ENCODE measurements at regions of chr11 and their contacts with region 1.

Region 1: GRCh38 chr11:107858217-107859070 is at the start of gene SLC35F2:
- DNase-seq: peak; percentile 89
- H3K4me3 ChIP-seq: peak within 1 kb of the TSS; percentile 81 to 94 (median 91)
- H3K27ac ChIP-seq: peak within 1 kb of the TSS; percentile 35
- H3K4me1 ChIP-seq: peaks cover 12% of the 10 kb centered on the region
- H3K27me3 ChIP-seq: no peaks in the 10 kb centered on the region
- CTCF ChIP-seq: peak in 1 of 2 donors; percentile 22
- total RNA-seq, gene SLC35F2: 23.5 to 35.3 TPM

Region 2: GRCh38 chr11:107676336-107677057 is 181.9 kb before region 1 on chr11:
- CTCF ChIA-PET with region 1: no interaction called
- dilution Hi-C with region 1: no loop called
- in situ Hi-C with region 1: no loop called
- intact Hi-C with region 1: no loop called
- DNase-seq: no peak
- H3K4me3 ChIP-seq: no peak overlapping the region
- H3K27ac ChIP-seq: no peak overlapping the region
- H3K4me1 ChIP-seq: no peaks in the 10 kb centered on the region
- H3K27me3 ChIP-seq: no peaks in the 10 kb centered on the region
- CTCF ChIP-seq: no peak

Region 3: DNA sequence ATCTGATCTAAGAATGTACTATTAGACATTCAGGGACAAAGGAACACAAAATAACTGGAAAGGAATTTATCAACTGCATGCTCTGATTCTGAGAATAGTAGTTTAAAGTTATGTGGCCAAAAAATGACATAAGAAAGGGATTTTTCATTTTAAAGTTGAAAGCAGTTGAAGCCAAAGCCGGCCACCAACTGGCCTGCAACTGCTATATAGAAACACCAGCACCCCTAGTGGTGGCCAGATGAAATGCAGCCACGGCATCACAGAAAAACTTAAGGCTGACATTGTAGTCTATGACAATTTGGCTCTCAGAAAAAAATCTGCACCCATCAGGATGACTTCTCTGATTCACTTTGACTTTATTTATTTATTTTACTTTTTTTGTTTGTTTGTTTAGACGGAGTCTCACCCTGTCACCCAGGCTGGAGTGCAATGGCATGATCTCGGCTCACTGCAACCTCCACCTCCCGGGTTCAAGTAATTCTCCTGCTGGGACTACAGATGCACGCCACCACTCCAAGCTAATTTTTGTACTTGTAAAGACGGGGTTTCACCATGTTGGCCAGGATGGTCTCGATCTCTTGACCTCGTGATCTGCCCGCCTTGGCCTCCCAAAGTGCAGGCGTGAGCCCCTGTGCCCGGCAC is 59.1 kb before region 1 on chr11:
- CTCF ChIA-PET with region 1: no interaction called
- dilution Hi-C with region 1: no loop called
- in situ Hi-C with region 1: no loop called
- intact Hi-C with region 1: loop called (anchors 1 kb)
- DNase-seq: peak; percentile 38
- H3K4me3 ChIP-seq: no peak overlapping the region
- H3K27ac ChIP-seq: no peak overlapping the region
- H3K4me1 ChIP-seq: no peaks in the 10 kb centered on the region
- H3K27me3 ChIP-seq: no peaks in the 10 kb centered on the region
- CTCF ChIP-seq: peak; percentile 96 to 99

Measured in mammary epithelial cell (primary cell).